K562 (cell line): ENCODE measurements at regions of chr1 and their contacts with region 1.

Region 1: GRCh38 chr1:19628879-19629278 is 15.2 kb upstream of the NBL1 start:
- DNase-seq: no peak
- ATAC-seq: no peak; the same call in 2 of the 3 replicates
- H3K4me3 ChIP-seq: no peak overlapping the region
- H3K27ac ChIP-seq: no peak overlapping the region
- H3K4me1 ChIP-seq: no peaks in the 10 kb centered on the region
- H3K27me3 ChIP-seq: no peaks in the 10 kb centered on the region
- CTCF ChIP-seq: no peak
- EP300 ChIP-seq: no peak
- POLR2A ChIP-seq: no peak
- RAD21 ChIP-seq: no peak

Region 2: DNA sequence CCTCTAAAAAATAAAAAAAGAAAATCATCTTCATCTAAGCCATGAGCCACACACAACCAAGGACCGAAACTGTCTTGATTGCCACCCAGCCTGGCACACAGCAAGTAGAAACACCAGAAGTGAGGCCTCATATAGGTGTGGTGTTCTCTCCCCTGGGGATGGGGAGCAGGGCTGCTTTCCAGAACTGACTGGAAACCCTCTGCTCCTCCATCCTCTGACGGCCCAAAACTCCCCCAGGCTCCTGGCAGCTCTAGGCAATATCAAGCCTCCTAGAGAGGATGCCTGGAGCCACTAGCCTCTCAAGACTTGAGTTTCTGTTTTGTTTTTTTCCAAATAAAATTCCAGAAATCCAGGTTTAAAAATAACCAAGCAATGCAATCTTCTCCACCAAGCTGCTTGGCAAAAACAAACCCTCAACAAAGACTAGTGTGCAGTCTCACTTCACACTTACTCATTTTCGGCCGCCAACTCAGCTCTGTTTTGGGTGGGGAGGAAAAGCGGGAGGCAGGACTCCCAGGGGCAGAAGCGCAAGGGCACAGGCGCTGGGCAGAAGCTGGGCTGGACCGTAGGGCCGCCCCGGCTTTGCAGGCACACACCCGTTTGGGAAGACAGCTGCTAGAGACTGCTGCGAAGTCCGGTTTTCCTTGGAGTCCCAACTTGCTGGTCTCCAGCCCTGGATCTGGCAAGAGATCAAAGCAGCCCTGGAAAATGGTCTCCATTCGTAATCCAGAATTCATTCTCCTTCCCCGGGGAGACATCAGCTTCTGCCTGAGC is 65.4 kb before region 1 on chr1:
- CTCF ChIA-PET with region 1: no interaction called
- POLR2A ChIA-PET with region 1: no interaction called
- in situ Hi-C with region 1: no loop called
- intact Hi-C with region 1: no loop called
- DNase-seq: peak in 1 of 4 experiments; percentile 9
- ATAC-seq: peak; percentile 34; the same call in 1 of the 3 replicates
- H3K4me3 ChIP-seq: no peak overlapping the region
- H3K27ac ChIP-seq: no peak overlapping the region
- H3K4me1 ChIP-seq: peaks cover 0 to 4% of the 10 kb centered on the region in 2 experiments; a peak in 2 of 5 replicates
- H3K27me3 ChIP-seq: peaks cover 18 to 26% of the 10 kb centered on the region in 2 experiments
- CTCF ChIP-seq: no peak
- EP300 ChIP-seq: no peak
- POLR2A ChIP-seq: no peak
- RAD21 ChIP-seq: no peak

Region 3: GRCh38 chr1:19643602-19644394 is 14.9 kb after region 1 on chr1 and contains the start of gene NBL1:
- CTCF ChIA-PET with region 1: no interaction called
- POLR2A ChIA-PET with region 1: interaction called, 18 read pairs
- in situ Hi-C with region 1: no loop called
- intact Hi-C with region 1: no loop called
- DNase-seq: peak; percentile 69 to 93 (median 83)
- ATAC-seq: peak; percentile 62
- H3K4me3 ChIP-seq: peak within 1 kb of the TSS; percentile 34
- H3K27ac ChIP-seq: no peak within 1 kb of the TSS
- H3K4me1 ChIP-seq: peaks cover 0 to 36% of the 10 kb centered on the region in 2 experiments; a peak in 4 of 5 replicates
- H3K27me3 ChIP-seq: peaks cover 16 to 39% of the 10 kb centered on the region in 2 experiments; a peak in 4 of 5 replicates
- CTCF ChIP-seq: no peak
- EP300 ChIP-seq: no peak
- POLR2A ChIP-seq: no peak
- RAD21 ChIP-seq: no peak
- polyA plus RNA-seq, gene NBL1: 0.10 TPM in 1 of 2 experiments, not detected in the other

Region 4: GRCh38 chr1:20009212-20009611 is 380.3 kb after region 1 on chr1:
- CTCF ChIA-PET with region 1: no interaction called
- POLR2A ChIA-PET with region 1: no interaction called
- in situ Hi-C with region 1: no loop called
- intact Hi-C with region 1: no loop called
- DNase-seq: no peak
- ATAC-seq: no peak
- H3K4me3 ChIP-seq: no peak overlapping the region
- H3K27ac ChIP-seq: no peak overlapping the region
- H3K4me1 ChIP-seq: peaks cover 0 to 13% of the 10 kb centered on the region in 2 experiments; a peak in 4 of 5 replicates
- H3K27me3 ChIP-seq: no peaks in the 10 kb centered on the region
- CTCF ChIP-seq: no peak
- EP300 ChIP-seq: no peak
- POLR2A ChIP-seq: no peak
- RAD21 ChIP-seq: no peak